ENCODE measurements at regions of chr7 and their contacts with region 1.

Region 1: GRCh38 chr7:131859147-131859821 is 302.9 kb upstream of the PODXL start:
- DNase-seq: peak; percentile 26
- H3K4me3 ChIP-seq: no peak overlapping the region
- CTCF ChIP-seq: peak; percentile 94

Region 2: GRCh38 chr7:131843898-131844331 is 15.4 kb before region 1 on chr7:
- CTCF ChIA-PET with region 1: interaction called, 43 read pairs
- POLR2A ChIA-PET with region 1: no interaction called
- DNase-seq: no peak
- H3K4me3 ChIP-seq: no peak overlapping the region
- CTCF ChIP-seq: no peak

Region 3: DNA sequence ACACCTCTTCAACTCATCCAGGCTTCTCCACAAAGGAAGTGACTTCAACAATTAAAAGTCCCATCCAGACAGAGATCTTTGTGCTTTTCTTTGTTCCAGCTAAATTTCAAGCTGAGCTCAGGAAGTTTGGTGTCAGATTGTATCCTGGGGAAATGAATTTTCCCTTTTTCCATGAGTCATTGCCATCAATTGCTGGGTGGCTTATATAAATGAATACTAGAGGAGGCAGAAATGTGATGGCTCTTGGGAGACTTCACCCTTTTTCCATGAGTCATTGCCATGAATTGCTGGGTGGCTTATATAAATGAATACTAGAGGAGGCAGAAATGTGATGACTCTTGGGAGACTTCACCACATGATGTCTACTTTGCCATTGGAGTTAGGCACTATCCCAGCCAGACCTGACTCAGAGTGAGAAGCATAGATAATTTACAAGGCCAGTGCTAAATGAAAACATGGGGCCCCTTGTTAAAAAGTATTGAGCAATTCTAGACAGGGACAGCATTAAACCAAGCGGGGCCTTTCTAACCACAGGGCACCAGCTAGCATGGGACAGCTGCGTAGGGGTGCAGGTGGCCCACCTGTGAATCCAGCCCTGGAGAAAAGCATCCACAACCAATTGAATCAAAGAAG is 36.4 kb after region 1 on chr7:
- CTCF ChIA-PET with region 1: interaction called, 65 read pairs
- POLR2A ChIA-PET with region 1: interaction called, 3 read pairs
- DNase-seq: peak; percentile 96
- H3K4me3 ChIP-seq: no peak overlapping the region
- CTCF ChIP-seq: no peak

Region 4: GRCh38 chr7:132004536-132005272 is 145.4 kb after region 1 on chr7:
- CTCF ChIA-PET with region 1: interaction called, 12 read pairs
- POLR2A ChIA-PET with region 1: no interaction called
- DNase-seq: no peak
- H3K4me3 ChIP-seq: no peak overlapping the region
- CTCF ChIP-seq: peak; percentile 43

Region 5: GRCh38 chr7:132065193-132065988 is 206.1 kb after region 1 on chr7:
- CTCF ChIA-PET with region 1: interaction called, 15 read pairs
- POLR2A ChIA-PET with region 1: no interaction called
- DNase-seq: peak; percentile 90
- H3K4me3 ChIP-seq: no peak overlapping the region
- CTCF ChIP-seq: no peak

Region 6: DNA sequence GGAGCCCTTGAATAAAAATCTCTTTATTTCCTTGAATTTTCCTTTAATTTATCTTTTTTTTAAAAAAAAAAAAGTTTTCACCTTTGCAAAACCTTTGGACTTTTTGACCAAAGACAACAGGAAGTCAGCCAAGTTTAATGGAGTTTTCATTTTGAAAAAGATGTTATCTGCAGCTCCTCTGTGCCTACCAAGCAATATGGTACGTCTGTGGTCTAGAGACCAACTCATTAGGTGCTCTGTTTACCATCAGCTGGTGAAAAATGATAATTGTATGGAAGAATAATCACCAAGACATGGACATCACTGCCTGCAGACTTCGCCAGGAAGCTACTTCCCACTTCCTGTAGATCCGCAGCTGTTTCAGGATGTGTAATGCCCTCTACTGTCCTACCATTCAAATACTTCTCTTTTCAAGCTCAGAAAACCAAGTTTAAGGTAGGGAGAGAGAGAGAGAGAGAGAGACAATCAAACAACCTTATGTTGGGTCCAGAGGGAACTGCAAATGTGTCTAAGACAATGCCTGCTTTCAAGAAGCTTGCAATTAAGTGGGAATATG is 698.3 kb after region 1 on chr7:
- CTCF ChIA-PET with region 1: interaction called, 19 read pairs
- POLR2A ChIA-PET with region 1: no interaction called
- DNase-seq: no peak
- H3K4me3 ChIP-seq: no peak overlapping the region
- CTCF ChIP-seq: no peak